Posterior vena cava (tissue), 2 donors: ENCODE measurements at regions of chr4 and their contacts with region 1.

Region 1: GRCh38 chr4:26028793-26029567 is 115.0 kb downstream of the SMIM20 start:
- DNase-seq: peak; percentile 93

Region 2: GRCh38 chr4:25991340-25991739 is 37.6 kb before region 1 on chr4:
- intact Hi-C with region 1: loop called in 1 of 2 experiments (anchors 1 kb)
- DNase-seq: no peak

Region 3: DNA sequence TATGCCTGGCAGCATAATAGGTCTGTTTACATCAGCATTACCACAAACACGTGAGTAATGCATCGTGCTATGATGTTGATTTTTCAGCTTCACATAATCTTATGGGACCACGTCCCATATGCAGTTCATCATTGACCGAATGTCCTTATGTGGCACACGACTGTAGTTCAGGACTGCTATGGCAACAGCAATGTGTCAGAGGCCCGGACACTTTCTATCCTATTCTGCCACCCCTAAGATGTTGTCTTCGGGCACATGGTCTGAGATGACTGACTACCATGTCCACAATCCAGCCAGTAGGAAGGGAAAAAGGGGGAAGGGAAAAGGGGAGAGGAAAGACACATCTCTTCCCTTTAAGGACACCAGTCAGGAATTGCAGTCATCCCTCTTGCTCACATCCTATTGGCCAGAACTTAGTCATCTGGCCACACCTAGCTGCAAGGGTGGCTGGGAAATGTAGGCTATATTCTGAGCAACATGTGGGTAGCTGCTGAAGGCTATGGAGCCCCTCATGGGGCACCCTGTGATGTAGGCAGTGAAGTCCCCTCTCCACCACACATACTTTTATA is 95.9 kb after region 1 on chr4:
- intact Hi-C with region 1: no loop called
- DNase-seq: no peak

Region 4: GRCh38 chr4:26235500-26235899 is 206.5 kb after region 1 on chr4:
- intact Hi-C with region 1: loop called in 1 of 2 experiments (anchors 5 kb)
- DNase-seq: peak; percentile 92

Region 5: GRCh38 chr4:26320538-26321325 is 291.8 kb after region 1 on chr4 and contains the start of gene RBPJ:
- intact Hi-C with region 1: loop called (anchors 10 kb)
- DNase-seq: peak; percentile 97
- total RNA-seq, gene RBPJ: 78.4 to 116 TPM

Region 6: DNA sequence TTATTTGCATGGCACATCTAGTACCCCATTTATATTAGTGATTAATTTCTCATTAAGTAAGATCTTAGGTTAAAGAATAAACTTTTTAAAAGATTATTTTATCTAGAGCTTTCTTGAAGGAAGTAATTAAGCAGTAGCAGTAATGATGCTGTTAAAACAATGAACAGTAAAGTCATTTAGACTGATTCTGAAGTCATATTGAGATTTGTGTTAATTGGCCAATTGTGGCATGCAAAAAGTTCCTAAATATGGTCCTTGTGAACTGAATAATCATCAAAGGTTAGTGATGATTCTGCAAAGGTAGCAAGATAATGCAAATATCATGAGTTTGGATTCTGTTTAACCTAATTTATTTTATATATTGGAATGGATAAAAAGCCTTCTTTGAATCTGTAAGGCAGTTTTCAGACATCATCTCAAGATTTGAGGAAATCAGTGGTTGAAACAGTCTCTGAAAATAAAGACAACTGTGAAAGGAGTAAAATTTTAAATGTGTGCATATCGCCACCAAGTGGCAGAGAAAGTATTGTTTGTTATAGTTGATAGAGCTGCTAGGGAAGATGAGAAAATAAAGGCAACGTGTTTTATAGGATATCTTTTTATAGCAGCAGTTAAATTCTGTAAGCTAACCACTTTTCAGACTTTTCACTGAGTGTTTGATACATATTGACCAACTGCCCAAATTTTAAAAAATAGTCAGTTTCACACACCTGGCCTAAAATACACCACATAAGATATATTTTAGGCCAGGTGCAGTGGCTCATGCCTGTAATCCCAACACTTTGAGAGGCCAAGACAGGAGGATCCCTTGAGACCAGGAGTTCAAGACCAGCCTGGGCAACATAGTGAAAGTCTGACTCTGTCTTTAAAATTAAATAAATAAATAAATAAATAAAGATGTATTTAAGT is 381.7 kb after region 1 on chr4:
- intact Hi-C with region 1: loop called in 1 of 2 experiments (anchors 5 kb)
- DNase-seq: no peak